ENCODE measurements at regions of chr3 and their contacts with region 1.

Region 1: GRCh38 chr3:23202921-23203707 is at the start of gene UBE2E2:
- DNase-seq: peak; percentile 47
- H3K4me3 Mint-ChIP-seq: peak within 1 kb of the TSS; percentile 91
- H3K27ac Mint-ChIP-seq: peak within 1 kb of the TSS; percentile 78
- H3K4me1 Mint-ChIP-seq: peaks cover 33% of the 10 kb centered on the region
- H3K27me3 Mint-ChIP-seq: peaks cover 40% of the 10 kb centered on the region
- total RNA-seq, gene UBE2E2: 11.8 and 13.9 TPM in 2 replicates

Region 2: DNA sequence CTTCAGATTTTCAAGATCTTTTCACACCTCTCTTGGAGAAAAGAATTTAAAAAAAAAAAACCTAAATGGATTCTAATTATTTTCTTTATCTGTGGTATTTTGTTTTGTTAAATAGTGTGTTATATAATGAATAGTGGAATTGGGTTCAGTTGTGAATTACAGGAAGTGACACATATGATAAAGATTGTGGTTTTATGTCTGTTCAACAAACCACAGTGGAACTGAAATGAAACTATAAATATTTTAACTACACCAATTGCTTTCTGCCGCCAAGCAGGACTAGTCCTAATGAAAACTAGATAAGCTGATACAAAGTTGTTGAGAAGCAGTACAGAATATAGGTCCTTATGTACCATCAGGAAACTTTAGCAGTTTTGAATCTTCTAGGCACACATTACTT is 121.6 kb after region 1 on chr3:
- intact Hi-C with region 1: loop called (anchors 5 kb)
- DNase-seq: no peak
- H3K4me3 Mint-ChIP-seq: no peak overlapping the region
- H3K27ac Mint-ChIP-seq: no peak overlapping the region
- H3K4me1 Mint-ChIP-seq: peaks cover 12% of the 10 kb centered on the region
- H3K27me3 Mint-ChIP-seq: no peaks in the 10 kb centered on the region

Region 3: GRCh38 chr3:23442598-23443383 is 239.7 kb after region 1 on chr3:
- intact Hi-C with region 1: loop called (anchors 5 kb)
- DNase-seq: no peak
- H3K4me3 Mint-ChIP-seq: no peak overlapping the region
- H3K27ac Mint-ChIP-seq: no peak overlapping the region
- H3K4me1 Mint-ChIP-seq: peaks cover 32% of the 10 kb centered on the region
- H3K27me3 Mint-ChIP-seq: peaks cover 13% of the 10 kb centered on the region

Region 4: GRCh38 chr3:23811919-23812318 is 608.8 kb after region 1 on chr3:
- intact Hi-C with region 1: loop called (anchors 2 kb)
- DNase-seq: no peak
- H3K4me3 Mint-ChIP-seq: peak overlapping the region; percentile 87
- H3K27ac Mint-ChIP-seq: peak overlapping the region; percentile 96
- H3K4me1 Mint-ChIP-seq: peaks cover 70% of the 10 kb centered on the region
- H3K27me3 Mint-ChIP-seq: peaks cover 3% of the 10 kb centered on the region

Measured in activated T-helper 1 cell treated with anti-CD3 and anti-CD28 coated beads, Interleukin-12 subunit alpha, Interleukin-12 subunit beta, Interleukin-2, Interleukin-4 antibody, amounts not matched to agents 30 ng/mL and 10 ng/mL and 1 ng/mL, durations not matched to agents 14 hours and 24 hours and 36 hours (primary cell).